Naive thymus-derived CD4-positive, alpha-beta T cell (primary cell): ENCODE measurements at regions of chr5 and their contacts with region 1.

Region 1: GRCh38 chr5:178626484-178627258 is at the start of gene CLK4:
- DNase-seq: peak; percentile 94 to 98 (median 97)
- ATAC-seq: peak; percentile 96
- H3K4me3 ChIP-seq: peak within 1 kb of the TSS; percentile 81
- H3K4me3 Mint-ChIP-seq: peak within 1 kb of the TSS; percentile 95 to 100 (median 98)
- H3K27ac ChIP-seq: peak within 1 kb of the TSS; percentile 98
- H3K27ac Mint-ChIP-seq: peak within 1 kb of the TSS; percentile 99 to 100 (median 99)
- H3K4me1 ChIP-seq: peaks cover 21 to 34% of the 10 kb centered on the region in 2 donors
- H3K4me1 Mint-ChIP-seq: peaks cover 23 to 43% (median 40%) of the 10 kb centered on the region in 7 donors
- H3K27me3 ChIP-seq: no peaks in the 10 kb centered on the region
- H3K27me3 Mint-ChIP-seq: peaks cover 0 to 15% (median 0%) of the 10 kb centered on the region in 5 donors
- total RNA-seq, gene CLK4: 38.0 to 154 (median 106) TPM

Region 2: DNA sequence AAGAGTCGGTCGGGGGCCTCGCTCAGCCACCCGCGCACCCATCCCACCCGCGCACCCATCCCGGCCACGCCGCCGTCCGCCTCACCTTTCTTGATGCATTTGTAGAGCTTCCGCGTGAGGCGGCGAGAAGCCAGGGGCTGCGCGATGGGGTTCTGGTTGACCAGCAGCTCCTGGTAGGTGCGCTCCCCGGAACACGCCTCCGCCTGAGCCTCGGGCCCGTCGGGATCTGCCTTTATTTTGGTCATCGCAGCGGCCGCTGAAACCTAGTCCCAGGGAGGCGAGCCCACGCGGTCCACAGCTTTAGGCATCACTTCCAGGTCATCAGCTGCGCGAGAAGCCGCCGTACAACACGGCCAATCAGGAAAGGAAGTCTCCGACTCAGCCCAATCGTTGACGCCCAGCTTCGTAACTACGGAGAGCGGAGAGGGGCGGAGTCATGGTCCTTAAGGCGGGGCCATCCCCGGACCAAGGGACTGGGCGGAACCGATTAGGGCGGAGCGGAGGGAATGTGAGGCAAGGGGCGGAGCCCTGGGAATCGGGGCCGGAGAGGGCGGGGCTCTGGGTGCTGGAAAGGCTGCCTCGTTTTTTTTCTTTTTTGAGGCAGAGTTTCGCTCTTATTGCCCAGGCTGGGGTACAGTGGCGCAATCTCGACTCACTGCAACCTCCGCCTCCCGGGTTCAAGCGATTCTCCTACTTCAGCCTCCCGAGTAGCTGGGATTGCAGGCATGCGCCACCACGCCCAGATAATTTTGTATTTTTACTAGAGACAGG is 472.9 kb before region 1 on chr5 and contains the start of gene NHP2:
- CTCF ChIA-PET with region 1: no interaction called
- POLR2A ChIA-PET with region 1: no interaction called
- intact Hi-C with region 1: loop called in 1 of 2 experiments (anchors 5 kb)
- DNase-seq: peak; percentile 89 to 98 (median 96)
- ATAC-seq: peak; percentile 100
- H3K4me3 ChIP-seq: peak within 1 kb of the TSS; percentile 85
- H3K4me3 Mint-ChIP-seq: peak within 1 kb of the TSS; percentile 88 to 98 (median 96)
- H3K27ac ChIP-seq: peak within 1 kb of the TSS; percentile 72
- H3K27ac Mint-ChIP-seq: peak within 1 kb of the TSS; percentile 55 to 96 (median 88)
- H3K4me1 ChIP-seq: peaks cover 11 to 18% of the 10 kb centered on the region in 2 donors
- H3K4me1 Mint-ChIP-seq: peaks cover 13 to 44% (median 38%) of the 10 kb centered on the region in 7 donors
- H3K27me3 ChIP-seq: no peaks in the 10 kb centered on the region
- H3K27me3 Mint-ChIP-seq: peaks cover 0 to 1% (median 0%) of the 10 kb centered on the region in 5 donors
- total RNA-seq, gene NHP2: 50.5 to 149 (median 70.5) TPM

Region 3: GRCh38 chr5:178483620-178484019 is 143.1 kb before region 1 on chr5:
- CTCF ChIA-PET with region 1: no interaction called
- POLR2A ChIA-PET with region 1: no interaction called
- intact Hi-C with region 1: loop called in 1 of 2 experiments (anchors 2 kb)
- DNase-seq: peak in 7 of 9 donors; percentile 68 to 86 (median 79)
- ATAC-seq: peak; percentile 99
- H3K4me3 ChIP-seq: no peak overlapping the region
- H3K4me3 Mint-ChIP-seq: peak overlapping the region; percentile 61 to 88 (median 79)
- H3K27ac ChIP-seq: peak overlapping the region; percentile 50
- H3K27ac Mint-ChIP-seq: peak overlapping the region in 8 of 9 donors; percentile 84 to 98 (median 92)
- H3K4me1 ChIP-seq: peaks cover 0 to 6% of the 10 kb centered on the region in 2 donors
- H3K4me1 Mint-ChIP-seq: peaks cover 0 to 11% (median 6%) of the 10 kb centered on the region in 7 donors
- H3K27me3 ChIP-seq: no peaks in the 10 kb centered on the region
- H3K27me3 Mint-ChIP-seq: peaks cover 0 to 8% (median 0%) of the 10 kb centered on the region in 5 donors

Region 4: DNA sequence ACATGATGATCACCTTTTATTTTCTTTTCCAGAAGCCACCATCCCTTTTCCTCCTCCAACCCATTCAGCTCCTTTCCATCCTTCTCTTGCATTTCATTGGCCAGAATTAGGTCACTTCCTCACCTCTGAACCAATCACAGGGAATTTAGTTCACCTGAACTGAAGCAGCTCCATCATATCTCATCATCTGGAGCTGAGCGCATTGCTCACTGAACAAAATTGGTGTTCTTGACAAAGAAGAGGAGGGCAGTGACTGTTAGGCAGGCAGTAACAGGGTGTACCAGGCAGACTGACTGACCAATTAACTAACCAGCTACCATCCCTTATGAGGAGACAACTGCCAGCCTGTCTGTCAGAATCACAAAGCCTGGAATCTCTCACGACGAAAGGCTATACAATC is 105.6 kb after region 1 on chr5:
- CTCF ChIA-PET with region 1: no interaction called
- POLR2A ChIA-PET with region 1: interaction called, 4 read pairs
- intact Hi-C with region 1: loop called (anchors 1 kb)
- DNase-seq: no peak
- ATAC-seq: no peak
- H3K4me3 ChIP-seq: no peak overlapping the region
- H3K4me3 Mint-ChIP-seq: peak overlapping the region in 1 of 10 donors; percentile 42
- H3K27ac ChIP-seq: no peak overlapping the region
- H3K27ac Mint-ChIP-seq: peak overlapping the region in 1 of 9 donors; percentile 45
- H3K4me1 ChIP-seq: no peaks in the 10 kb centered on the region
- H3K4me1 Mint-ChIP-seq: peaks cover 0 to 13% (median 11%) of the 10 kb centered on the region in 7 donors
- H3K27me3 ChIP-seq: no peaks in the 10 kb centered on the region
- H3K27me3 Mint-ChIP-seq: peaks cover 0 to 3% (median 0%) of the 10 kb centered on the region in 5 donors

Region 5: DNA sequence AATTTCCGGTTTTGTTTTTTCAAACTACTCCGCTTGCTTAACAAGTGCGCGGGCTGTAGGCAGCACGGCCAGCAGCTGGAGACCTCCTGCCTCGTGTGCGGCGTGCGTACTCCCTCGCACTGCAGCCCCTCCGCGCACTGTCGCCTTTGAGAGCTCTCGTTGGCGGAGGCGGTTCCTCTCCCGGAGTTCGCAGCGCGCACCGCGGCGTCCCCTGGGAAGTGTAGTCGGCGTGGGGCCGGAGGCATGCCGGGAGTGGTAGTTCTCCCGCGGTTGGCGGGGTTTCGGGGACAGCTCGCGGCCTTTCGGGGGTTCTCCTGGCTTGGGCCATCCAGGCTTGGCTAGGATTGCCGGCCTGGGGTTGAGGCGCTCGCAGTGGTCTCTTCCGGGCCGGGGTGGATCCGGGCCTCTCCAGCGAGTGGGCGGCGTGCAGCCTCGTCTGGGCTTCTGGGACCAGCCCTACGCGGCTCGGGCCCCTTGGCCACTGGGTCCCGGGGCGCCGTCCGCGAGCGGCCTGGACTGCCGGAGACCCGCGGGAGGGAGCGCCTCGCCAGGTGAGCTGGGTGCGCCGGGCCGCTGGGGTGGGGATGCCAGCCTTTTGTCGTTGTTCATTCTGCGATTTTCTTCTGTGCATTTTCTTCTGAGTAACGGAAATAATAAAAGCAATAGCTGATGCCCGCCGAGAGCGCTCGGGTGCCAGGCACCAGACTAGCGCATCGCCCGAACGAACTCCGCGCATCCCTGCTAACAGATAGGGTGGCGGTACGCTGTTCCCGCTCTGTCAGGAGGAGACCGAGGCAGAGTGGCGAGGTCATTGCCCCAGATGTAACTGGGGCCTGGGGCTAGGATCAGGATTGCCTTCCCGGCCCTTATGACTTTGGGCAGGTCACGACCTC is 433.7 kb after region 1 on chr5 and contains the start of gene ZNF354C:
- CTCF ChIA-PET with region 1: no interaction called
- POLR2A ChIA-PET with region 1: interaction called, 4 read pairs
- intact Hi-C with region 1: loop called (anchors 1 to 2 kb)
- DNase-seq: peak; percentile 77 to 87 (median 82)
- ATAC-seq: peak; percentile 98
- H3K4me3 ChIP-seq: peak within 1 kb of the TSS; percentile 73
- H3K4me3 Mint-ChIP-seq: peak within 1 kb of the TSS; percentile 89 to 99 (median 94)
- H3K27ac ChIP-seq: peak within 1 kb of the TSS; percentile 79
- H3K27ac Mint-ChIP-seq: peak within 1 kb of the TSS; percentile 82 to 96 (median 92)
- H3K4me1 ChIP-seq: peaks cover 0 to 9% of the 10 kb centered on the region in 2 donors
- H3K4me1 Mint-ChIP-seq: peaks cover 16 to 43% (median 32%) of the 10 kb centered on the region in 7 donors
- H3K27me3 ChIP-seq: no peaks in the 10 kb centered on the region
- H3K27me3 Mint-ChIP-seq: peaks cover 0 to 9% (median 5%) of the 10 kb centered on the region in 5 donors
- total RNA-seq, gene ZNF354C: 3.8 to 12.3 (median 5.2) TPM

Region 6: DNA sequence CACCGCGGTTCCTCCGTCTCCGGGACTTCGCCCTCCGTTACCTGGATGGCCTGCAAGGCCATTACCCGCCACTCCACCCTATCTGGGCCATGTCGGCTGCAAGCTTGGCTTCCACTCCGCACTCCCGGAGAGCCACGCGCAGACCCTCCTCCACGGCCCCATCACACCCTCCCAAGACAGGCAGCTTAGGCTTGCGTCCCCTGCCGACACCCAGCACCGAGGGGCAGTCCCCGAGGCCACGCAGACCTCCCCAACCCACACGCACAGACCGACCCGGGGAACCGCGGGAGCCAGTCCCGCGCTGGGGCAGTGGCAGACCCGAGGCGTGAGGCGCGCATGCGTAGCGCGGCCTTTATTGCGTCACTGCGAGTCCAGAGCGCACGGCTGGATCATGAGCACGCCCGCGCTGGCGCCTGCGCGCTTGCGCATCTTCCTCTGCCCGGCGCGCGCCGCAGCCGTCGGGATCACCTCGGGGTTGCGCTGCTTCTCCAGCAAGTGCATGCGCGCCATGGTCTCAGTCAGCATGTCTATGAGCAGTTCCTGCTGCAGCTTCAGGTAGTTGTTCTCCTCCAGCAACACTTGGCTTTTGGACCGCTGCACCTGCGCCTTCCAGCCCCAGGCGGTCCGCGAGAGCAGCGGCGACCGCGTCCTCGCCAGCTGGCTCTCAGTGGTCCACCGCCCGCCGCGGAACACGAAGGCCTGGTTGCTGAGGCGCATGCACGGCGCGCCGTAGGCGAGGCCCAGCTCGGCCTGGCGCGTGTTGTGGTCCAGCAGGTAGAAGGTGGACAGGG is 1051.7 kb after region 1 on chr5:
- CTCF ChIA-PET with region 1: no interaction called
- POLR2A ChIA-PET with region 1: no interaction called
- intact Hi-C with region 1: loop called (anchors 5 kb)
- DNase-seq: peak; percentile 88 to 95 (median 92)
- ATAC-seq: peak; percentile 91
- H3K4me3 ChIP-seq: peak overlapping the region; percentile 99
- H3K4me3 Mint-ChIP-seq: peak overlapping the region; percentile 95 to 99 (median 98)
- H3K27ac ChIP-seq: peak overlapping the region; percentile 87
- H3K27ac Mint-ChIP-seq: peak overlapping the region; percentile 89 to 99 (median 97)
- H3K4me1 ChIP-seq: peaks cover 4 to 5% of the 10 kb centered on the region in 2 donors
- H3K4me1 Mint-ChIP-seq: peaks cover 15 to 39% (median 30%) of the 10 kb centered on the region in 7 donors
- H3K27me3 ChIP-seq: no peaks in the 10 kb centered on the region
- H3K27me3 Mint-ChIP-seq: peaks cover 0 to 5% (median 0%) of the 10 kb centered on the region in 5 donors

Region 7: GRCh38 chr5:180494060-180494509 is 1867.4 kb after region 1 on chr5 and contains the start of gene CNOT6:
- CTCF ChIA-PET with region 1: no interaction called
- POLR2A ChIA-PET with region 1: no interaction called
- intact Hi-C with region 1: loop called in 1 of 2 experiments (anchors 5 kb)
- DNase-seq: peak; percentile 91 to 98 (median 95)
- ATAC-seq: peak; percentile 98
- H3K4me3 ChIP-seq: peak within 1 kb of the TSS; percentile 83
- H3K4me3 Mint-ChIP-seq: peak within 1 kb of the TSS; percentile 85 to 99 (median 96)
- H3K27ac ChIP-seq: peak within 1 kb of the TSS; percentile 98
- H3K27ac Mint-ChIP-seq: peak within 1 kb of the TSS; percentile 84 to 98 (median 95)
- H3K4me1 ChIP-seq: peaks cover 10 to 27% of the 10 kb centered on the region in 2 donors
- H3K4me1 Mint-ChIP-seq: peaks cover 29 to 42% (median 35%) of the 10 kb centered on the region in 7 donors
- H3K27me3 ChIP-seq: no peaks in the 10 kb centered on the region
- H3K27me3 Mint-ChIP-seq: no peaks in the 10 kb centered on the region
- total RNA-seq, gene CNOT6: 22.8 to 41.9 (median 30.0) TPM